Activated naive CD4-positive, alpha-beta T cell treated with anti-CD3 and anti-CD28 coated beads, Interleukin-2, amount 10 ng/mL, durations not matched to agents 7 days and 5 days (primary cell): ENCODE measurements at regions of chr10 and their contacts with region 1.

Region 1: DNA sequence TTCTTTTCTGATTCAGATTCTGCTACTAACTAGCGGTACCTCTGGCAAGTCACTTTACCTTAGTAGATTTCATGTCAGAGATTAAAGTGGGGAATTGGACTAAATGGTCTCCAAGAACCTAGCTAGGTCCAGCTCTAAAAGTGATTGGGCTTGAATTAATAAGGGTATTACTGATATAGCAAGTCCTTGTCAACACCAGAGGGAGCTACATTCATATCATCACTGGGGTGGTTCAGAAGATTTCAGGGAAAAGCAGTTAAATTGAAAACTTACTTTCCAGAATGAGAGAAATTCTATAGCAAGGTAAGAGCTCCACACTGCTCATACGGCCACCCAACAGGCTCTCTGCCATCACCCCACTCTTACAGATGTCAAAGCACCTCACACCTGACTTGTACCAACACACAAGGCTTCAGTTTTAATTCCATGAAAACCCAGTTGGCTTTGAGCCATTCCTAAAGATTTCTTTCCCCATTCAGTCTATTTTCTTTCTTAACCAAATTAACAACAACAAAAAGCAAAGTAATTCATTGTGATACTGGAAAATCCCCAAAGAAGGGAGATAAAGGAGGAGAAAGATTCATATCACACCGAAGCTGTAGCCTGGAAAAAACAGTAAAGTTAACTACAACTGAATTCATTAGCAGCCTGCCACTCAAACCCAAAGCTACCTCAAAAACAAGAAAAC is 38.0 kb upstream of the SPOCK2 start:
- DNase-seq: no peak
- H3K4me3 Mint-ChIP-seq: no peak overlapping the region
- H3K27ac Mint-ChIP-seq: no peak overlapping the region
- H3K4me1 Mint-ChIP-seq: peaks cover 34% of the 10 kb centered on the region
- H3K27me3 Mint-ChIP-seq: no peaks in the 10 kb centered on the region

Region 2: DNA sequence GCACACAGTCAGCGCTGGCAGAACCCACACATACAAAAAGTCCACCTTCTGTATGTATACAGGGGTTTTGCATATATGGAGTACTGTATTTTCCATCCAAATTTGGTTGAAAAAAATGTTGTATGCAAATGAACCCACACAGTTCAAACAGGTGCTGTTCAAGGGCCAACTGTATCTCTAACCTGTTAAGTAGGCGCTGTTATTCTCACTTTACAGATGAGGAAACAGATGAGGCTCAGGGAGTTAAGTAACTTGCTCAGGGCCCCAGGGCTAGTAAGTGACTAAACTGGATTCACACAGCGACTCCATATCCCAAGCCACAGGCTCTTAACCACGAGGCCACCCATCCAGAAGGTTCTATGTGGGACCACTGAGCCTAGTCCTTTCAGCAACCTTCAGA is 476.7 kb before region 1 on chr10:
- CTCF ChIA-PET with region 1: no interaction called
- DNase-seq: no peak
- H3K4me3 Mint-ChIP-seq: no peak overlapping the region
- H3K27ac Mint-ChIP-seq: no peak overlapping the region
- H3K4me1 Mint-ChIP-seq: peaks cover 4% of the 10 kb centered on the region
- H3K27me3 Mint-ChIP-seq: peaks cover 28% of the 10 kb centered on the region

Region 3: DNA sequence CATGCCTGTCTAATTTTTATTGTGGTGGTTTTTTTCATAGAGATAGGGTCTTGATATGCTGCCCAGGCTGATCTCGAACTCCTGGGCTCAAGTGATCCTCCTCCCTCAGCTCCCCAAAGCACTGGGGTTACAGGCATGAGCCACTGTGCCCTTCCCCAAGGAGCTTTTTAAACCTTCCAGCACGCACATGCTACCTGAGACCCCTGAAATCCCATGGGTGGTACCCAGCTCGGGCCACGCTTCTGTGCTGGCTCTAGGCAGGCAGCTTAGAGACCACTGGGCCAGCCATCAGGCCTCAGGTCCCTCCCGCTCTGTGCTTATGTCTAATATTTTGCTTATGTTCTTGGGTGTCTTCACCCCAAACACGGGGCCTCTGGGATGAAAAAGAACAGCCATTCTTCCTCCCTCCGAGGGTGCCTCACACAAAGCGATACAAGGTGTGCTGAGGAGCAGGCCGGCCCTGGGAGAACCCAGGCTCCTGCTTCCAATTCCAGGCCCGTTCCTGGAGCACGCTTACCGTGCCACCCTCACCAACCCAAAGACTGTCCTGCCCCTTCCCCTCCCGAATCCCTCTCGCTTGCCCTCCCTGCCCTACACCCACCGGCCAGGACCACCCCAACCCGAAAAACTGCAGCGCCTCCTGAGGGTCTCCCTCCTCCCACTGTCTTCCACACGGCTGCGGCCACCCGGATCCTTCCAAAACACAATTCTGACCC is 48.9 kb before region 1 on chr10:
- CTCF ChIA-PET with region 1: no interaction called
- DNase-seq: no peak
- H3K4me3 Mint-ChIP-seq: no peak overlapping the region
- H3K27ac Mint-ChIP-seq: no peak overlapping the region
- H3K4me1 Mint-ChIP-seq: peaks cover 71% of the 10 kb centered on the region
- H3K27me3 Mint-ChIP-seq: no peaks in the 10 kb centered on the region

Region 4: GRCh38 chr10:72088889-72089575 is 37.3 kb before region 1 on chr10:
- CTCF ChIA-PET with region 1: interaction called, 15 read pairs
- DNase-seq: peak; percentile 72
- H3K4me3 Mint-ChIP-seq: peak overlapping the region; percentile 98
- H3K27ac Mint-ChIP-seq: peak overlapping the region; percentile 99
- H3K4me1 Mint-ChIP-seq: peaks cover 47% of the 10 kb centered on the region
- H3K27me3 Mint-ChIP-seq: no peaks in the 10 kb centered on the region

Region 5: DNA sequence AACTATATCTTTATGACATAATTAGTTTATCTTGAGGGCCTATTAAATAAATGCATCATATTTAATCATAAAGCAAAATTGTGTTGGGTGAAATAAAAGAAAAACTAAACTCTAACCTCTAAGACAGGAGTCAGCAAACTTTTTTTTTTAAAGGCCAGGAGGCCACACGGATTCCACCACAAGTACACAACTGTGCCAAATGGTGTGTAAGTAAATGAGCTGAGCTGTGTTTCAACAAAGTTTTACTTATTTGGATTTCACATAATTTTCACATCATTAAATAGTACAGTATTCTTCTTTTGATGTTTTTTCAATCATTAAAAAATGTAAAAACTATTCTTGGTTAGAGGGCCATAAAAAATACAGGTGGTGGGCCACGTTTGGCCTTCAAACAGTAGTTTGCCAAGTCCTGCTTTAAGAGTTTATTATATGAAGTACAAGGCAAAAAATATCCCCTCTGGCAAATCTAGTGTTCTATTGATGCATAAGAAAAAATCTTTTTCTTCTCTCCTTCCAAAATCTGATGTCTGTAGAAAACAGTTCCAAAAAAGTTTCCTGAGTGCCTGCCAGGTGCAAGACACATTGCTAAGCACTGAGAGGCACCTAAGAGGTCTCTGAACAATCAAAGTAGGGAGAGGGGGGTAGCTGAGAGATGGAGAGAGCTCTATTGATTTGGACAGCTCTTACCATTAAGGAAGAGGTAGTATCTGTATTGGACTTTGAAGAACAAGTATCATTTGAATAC is 11.4 kb before region 1 on chr10:
- CTCF ChIA-PET with region 1: interaction called, 23 read pairs
- DNase-seq: no peak
- H3K4me3 Mint-ChIP-seq: no peak overlapping the region
- H3K27ac Mint-ChIP-seq: no peak overlapping the region
- H3K4me1 Mint-ChIP-seq: peaks cover 19% of the 10 kb centered on the region
- H3K27me3 Mint-ChIP-seq: no peaks in the 10 kb centered on the region

Region 6: DNA sequence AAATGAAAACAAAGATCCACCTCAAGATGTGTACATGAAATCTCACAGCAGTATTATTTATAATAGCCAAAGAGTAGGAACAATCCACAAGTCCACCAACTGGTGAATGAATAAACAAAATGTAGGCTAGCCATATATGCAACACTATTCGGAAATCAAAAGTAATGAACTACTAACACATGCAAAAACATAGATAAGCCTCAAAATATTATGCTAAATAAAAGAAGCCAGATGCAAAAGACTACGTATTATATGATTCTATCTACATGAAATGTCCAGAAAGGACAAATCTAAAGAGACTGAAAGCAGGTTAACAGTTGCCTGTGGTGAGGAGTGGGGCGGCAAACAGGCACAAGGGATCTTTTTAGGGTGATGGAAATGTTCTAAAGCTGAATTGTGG is 40.8 kb after region 1 on chr10:
- CTCF ChIA-PET with region 1: no interaction called
- DNase-seq: no peak
- H3K4me3 Mint-ChIP-seq: no peak overlapping the region
- H3K27ac Mint-ChIP-seq: no peak overlapping the region
- H3K4me1 Mint-ChIP-seq: peaks cover 17% of the 10 kb centered on the region
- H3K27me3 Mint-ChIP-seq: no peaks in the 10 kb centered on the region

Region 7: GRCh38 chr10:72218325-72218724 is 92.0 kb after region 1 on chr10:
- CTCF ChIA-PET with region 1: interaction called, 42 read pairs
- DNase-seq: no peak
- H3K4me3 Mint-ChIP-seq: peak overlapping the region; percentile 57
- H3K27ac Mint-ChIP-seq: peak overlapping the region; percentile 81
- H3K4me1 Mint-ChIP-seq: peaks cover 62% of the 10 kb centered on the region
- H3K27me3 Mint-ChIP-seq: no peaks in the 10 kb centered on the region

Region 8: DNA sequence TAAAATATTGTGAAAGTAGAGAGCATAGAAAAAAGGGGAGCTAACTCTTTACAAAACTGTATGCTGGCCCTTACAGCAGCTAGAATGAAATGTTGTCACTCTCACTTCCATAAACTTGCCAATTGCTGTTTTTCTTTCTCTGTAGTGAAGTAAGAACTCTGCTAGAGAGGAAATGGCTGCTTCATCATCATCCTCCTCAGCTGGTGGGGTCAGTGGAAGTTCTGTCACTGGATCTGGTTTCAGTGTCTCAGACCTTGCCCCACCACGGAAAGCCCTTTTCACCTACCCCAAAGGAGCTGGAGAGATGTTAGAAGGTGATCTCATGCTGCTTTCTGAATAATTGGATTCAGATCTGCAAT is 97.4 kb after region 1 on chr10:
- CTCF ChIA-PET with region 1: interaction called, 42 read pairs
- DNase-seq: no peak
- H3K4me3 Mint-ChIP-seq: no peak overlapping the region
- H3K27ac Mint-ChIP-seq: peak overlapping the region; percentile 56
- H3K4me1 Mint-ChIP-seq: peaks cover 52% of the 10 kb centered on the region
- H3K27me3 Mint-ChIP-seq: no peaks in the 10 kb centered on the region

Region 9: DNA sequence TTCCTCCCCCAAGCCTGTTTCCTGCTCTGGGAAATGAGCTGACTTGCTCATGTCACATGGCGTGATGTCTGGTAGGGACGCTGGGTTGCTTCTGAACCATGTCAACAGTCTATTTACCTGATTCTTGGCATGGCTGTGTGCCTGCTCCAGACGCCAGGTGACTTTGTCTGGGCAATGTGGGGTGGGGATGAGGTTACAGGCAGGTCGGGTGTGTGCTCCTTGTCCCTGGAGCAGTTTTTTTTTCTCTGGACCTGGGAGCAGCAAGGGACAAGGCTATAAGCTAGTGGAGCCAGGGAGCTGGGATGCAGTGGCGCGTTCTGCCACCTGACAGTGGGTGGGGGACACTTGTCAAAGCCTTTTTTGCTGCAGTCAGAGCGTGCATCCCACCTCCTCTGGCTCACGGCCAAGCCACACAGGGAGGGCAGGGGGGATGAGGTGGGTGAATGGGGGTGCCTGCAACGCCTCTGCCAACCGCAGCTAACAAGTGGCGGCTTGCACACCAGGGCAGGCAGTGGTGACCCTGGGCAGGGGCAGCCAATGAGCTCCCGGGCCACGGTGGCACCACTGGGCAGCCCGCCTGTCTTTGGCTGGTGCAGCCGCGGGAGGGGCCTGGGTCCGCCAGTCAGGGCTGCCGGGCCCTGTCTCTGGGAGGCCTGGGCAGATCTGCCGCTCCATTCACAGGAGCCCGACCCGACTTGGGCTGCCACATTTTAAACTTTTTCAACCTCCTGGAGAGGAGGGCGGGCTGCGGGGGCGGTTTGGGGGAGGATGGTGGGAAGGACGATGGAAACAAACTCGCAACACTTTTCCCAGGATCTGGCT is 205.5 kb after region 1 on chr10:
- CTCF ChIA-PET with region 1: interaction called, 90 read pairs
- DNase-seq: peak; percentile 94
- H3K4me3 Mint-ChIP-seq: peak overlapping the region; percentile 79
- H3K27ac Mint-ChIP-seq: peak overlapping the region; percentile 98
- H3K4me1 Mint-ChIP-seq: peaks cover 96% of the 10 kb centered on the region
- H3K27me3 Mint-ChIP-seq: no peaks in the 10 kb centered on the region

Region 10: GRCh38 chr10:72386916-72387586 is 260.7 kb after region 1 on chr10:
- CTCF ChIA-PET with region 1: no interaction called
- DNase-seq: no peak
- H3K4me3 Mint-ChIP-seq: no peak overlapping the region
- H3K27ac Mint-ChIP-seq: no peak overlapping the region
- H3K4me1 Mint-ChIP-seq: no peaks in the 10 kb centered on the region
- H3K27me3 Mint-ChIP-seq: no peaks in the 10 kb centered on the region